ENCODE measurements at regions of chr15 and their contacts with region 1.

Region 1: DNA sequence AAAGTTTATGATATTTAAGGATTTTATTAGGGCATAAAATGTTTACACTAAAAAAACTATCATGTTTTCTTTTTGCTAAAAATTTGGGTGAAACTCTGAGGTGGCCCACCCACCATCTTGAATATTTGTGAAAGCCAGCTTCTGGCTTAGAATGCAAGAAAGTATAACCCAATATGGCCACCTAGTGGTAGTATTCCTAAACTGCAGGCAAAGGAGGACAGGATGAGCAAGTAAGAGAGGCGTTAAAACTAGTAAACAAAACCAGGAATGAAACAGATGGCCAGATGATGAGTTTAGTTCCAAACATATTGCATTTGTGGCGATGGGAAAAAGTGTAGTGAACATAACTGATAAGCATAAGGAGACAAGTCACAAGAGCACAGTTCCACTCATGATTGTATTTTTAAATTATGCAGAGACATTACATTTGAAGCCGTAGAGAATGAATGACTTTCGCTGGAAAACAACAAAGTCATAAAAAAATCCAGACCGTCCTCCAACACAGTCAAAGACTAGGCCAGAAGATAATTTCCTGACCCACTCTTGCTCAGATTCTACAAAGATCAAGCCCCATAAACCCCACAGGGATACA is 103.3 kb upstream of the PRTG start:
- DNase-seq: peak in 3 of 5 donors; percentile 12 to 53 (median 31)
- H3K4me3 ChIP-seq: no peak overlapping the region
- H3K27ac ChIP-seq: no peak overlapping the region
- H3K4me1 ChIP-seq: no peaks in the 10 kb centered on the region
- H3K27me3 ChIP-seq: no peaks in the 10 kb centered on the region
- CTCF ChIP-seq: peak; percentile 42 to 52 (median 51)
- EP300 ChIP-seq: no peak
- POLR2A ChIP-seq: no peak

Region 2: DNA sequence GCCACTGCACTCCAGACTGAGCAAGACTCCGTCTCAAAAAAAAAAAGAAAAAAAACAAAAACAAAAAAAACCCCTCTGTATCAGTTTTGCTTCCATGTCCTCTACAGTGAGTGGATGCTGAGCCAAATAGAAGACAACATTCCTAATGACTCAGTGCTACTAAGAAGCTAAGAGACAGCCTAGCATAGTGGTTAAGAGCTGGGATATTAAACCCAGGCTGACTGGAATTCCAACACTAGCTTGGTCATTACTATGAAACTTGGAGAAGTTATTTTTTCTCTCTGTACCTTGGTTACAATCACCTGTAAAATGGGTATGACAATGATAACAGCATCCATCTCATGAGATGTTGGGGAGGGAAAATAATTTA is 197.2 kb before region 1 on chr15:
- intact Hi-C with region 1: loop called in 3 of 4 experiments (anchors 10 kb)
- DNase-seq: no peak
- H3K4me3 ChIP-seq: no peak overlapping the region
- H3K27ac ChIP-seq: no peak overlapping the region
- H3K4me1 ChIP-seq: no peaks in the 10 kb centered on the region
- H3K27me3 ChIP-seq: no peaks in the 10 kb centered on the region
- CTCF ChIP-seq: no peak
- EP300 ChIP-seq: no peak
- POLR2A ChIP-seq: no peak

Region 3: DNA sequence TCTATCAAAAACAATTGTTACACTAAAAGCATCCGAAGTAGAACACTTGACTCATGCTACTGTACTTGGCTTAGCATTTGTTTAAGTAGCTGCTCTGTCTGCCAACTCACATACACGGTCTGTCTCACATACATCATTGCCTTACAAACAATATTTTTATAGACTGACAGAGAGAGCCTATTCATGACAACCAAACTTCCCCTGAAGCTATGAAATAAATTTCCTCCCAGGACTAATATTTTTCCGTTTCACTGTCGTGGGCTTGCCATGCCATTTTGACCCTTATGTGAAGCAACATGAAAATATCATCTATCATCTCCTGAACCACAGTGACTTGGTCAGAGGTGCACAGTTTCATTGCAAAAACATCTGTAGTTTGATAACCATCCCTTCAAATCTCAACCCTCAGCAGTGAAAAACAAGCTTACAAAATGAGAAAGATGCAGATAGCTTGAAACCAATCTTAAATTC is 191.6 kb before region 1 on chr15:
- intact Hi-C with region 1: loop called in 3 of 4 experiments (anchors 10 kb)
- DNase-seq: no peak
- H3K4me3 ChIP-seq: no peak overlapping the region
- H3K27ac ChIP-seq: no peak overlapping the region
- H3K4me1 ChIP-seq: no peaks in the 10 kb centered on the region
- H3K27me3 ChIP-seq: no peaks in the 10 kb centered on the region
- CTCF ChIP-seq: no peak
- EP300 ChIP-seq: no peak
- POLR2A ChIP-seq: no peak

Region 4: GRCh38 chr15:55784286-55784685 is 61.9 kb before region 1 on chr15:
- intact Hi-C with region 1: no loop called
- DNase-seq: no peak
- H3K4me3 ChIP-seq: no peak overlapping the region
- H3K27ac ChIP-seq: no peak overlapping the region
- H3K4me1 ChIP-seq: no peaks in the 10 kb centered on the region
- H3K27me3 ChIP-seq: no peaks in the 10 kb centered on the region
- CTCF ChIP-seq: no peak
- EP300 ChIP-seq: no peak
- POLR2A ChIP-seq: no peak

Measured in ovary (tissue), 10 donors.